ENCODE measurements at regions of chr1 and their contacts with region 1.

Region 1: DNA sequence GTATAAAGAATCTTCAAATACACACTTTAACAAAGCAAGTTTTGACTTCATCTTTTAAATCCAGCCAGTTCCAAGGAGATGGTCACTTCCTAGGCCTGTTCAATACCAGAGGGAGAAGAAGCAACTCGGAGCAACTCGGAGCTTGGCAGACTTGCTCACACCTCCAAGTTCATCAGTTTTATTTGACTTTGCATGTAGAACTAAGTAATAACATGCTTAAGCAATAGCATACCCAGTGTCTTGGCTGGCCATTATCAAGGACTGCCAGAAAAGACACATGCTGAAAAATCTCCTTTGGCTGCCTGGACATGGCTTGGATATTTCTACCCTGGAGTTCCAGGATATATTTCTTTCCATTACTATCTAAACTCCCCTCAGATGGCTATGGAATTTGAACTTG is 52.6 kb downstream of the GNG12 start:
- DNase-seq: no peak
- H3K4me3 ChIP-seq: no peak overlapping the region
- H3K27ac ChIP-seq: no peak overlapping the region
- H3K4me1 ChIP-seq: no peaks in the 10 kb centered on the region
- H3K27me3 ChIP-seq: no peaks in the 10 kb centered on the region

Region 2: DNA sequence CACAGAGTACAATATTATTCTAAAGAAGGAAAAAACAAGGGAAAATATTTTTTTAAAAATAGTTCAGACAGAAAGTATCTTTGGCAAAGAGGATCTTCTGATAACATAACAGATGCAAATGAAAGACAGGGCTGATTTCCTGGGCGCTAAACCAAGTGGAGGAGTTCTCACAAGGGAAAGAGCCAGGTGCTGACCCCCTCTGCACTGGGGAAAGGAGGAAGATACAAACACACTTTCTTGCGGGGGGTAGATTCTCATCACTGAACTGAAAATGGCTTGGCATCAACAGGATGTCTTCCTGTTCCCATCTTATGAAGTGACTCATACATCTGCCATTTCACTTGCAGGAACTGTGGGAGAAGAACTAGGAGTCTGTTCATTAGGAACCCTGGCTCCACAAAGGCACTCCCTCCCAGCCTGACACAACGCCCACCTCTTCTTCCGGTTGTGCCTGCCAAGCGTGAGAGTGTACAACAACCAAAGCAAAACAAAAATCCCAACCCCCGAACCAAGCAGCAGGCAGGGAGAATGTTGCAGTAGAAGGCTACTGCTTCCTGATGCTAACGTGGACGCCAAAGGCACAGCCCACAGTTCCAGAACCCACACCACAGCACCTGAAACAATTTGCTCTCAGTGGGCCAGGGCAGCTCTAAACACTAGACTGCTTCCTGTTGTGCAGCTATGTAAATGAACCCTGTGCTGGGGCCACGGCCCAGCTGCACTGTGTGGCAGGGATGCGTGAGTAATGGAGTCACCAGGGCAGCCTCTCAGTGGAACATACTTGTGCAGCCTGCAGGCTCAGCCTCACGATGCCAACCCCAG is 44.6 kb before region 1 on chr1:
- CTCF ChIA-PET with region 1: no interaction called
- POLR2A ChIA-PET with region 1: no interaction called
- DNase-seq: peak in 2 of 3 donors; percentile 51 to 67
- H3K4me3 ChIP-seq: peak overlapping the region in 4 of 7 experiments; percentile 19 to 58 (median 24)
- H3K27ac ChIP-seq: peak overlapping the region in 1 of 2 experiments; percentile 4
- H3K4me1 ChIP-seq: peaks cover 9 to 68% (median 45%) of the 10 kb centered on the region in 4 experiments
- H3K27me3 ChIP-seq: no peaks in the 10 kb centered on the region

Region 3: GRCh38 chr1:68234094-68234493 is 453.5 kb after region 1 on chr1:
- CTCF ChIA-PET with region 1: no interaction called
- POLR2A ChIA-PET with region 1: interaction called, 10 read pairs
- DNase-seq: no peak
- H3K4me3 ChIP-seq: no peak overlapping the region
- H3K27ac ChIP-seq: no peak overlapping the region
- H3K4me1 ChIP-seq: peaks cover 3 to 24% (median 15%) of the 10 kb centered on the region in 4 experiments
- H3K27me3 ChIP-seq: peaks cover 30 to 60% (median 47%) of the 10 kb centered on the region in 5 experiments